ENCODE measurements at regions of chr17 and their contacts with region 1.

Region 1: GRCh38 chr17:73255671-73256181 is 6.0 kb downstream of the CPSF4L start:
- DNase-seq: peak; percentile 55 to 64
- ATAC-seq: peak; percentile 63 to 87 (median 72)
- H3K4me3 ChIP-seq: no peak overlapping the region
- H3K27ac ChIP-seq: no peak overlapping the region
- H3K4me1 ChIP-seq: peaks cover 0 to 8% (median 0%) of the 10 kb centered on the region in 9 donors
- H3K27me3 ChIP-seq: no peaks in the 10 kb centered on the region
- CTCF ChIP-seq: peak in 8 of 9 donors; percentile 94 to 99 (median 98)

Region 2: GRCh38 chr17:73371285-73371684 is 115.6 kb after region 1 on chr17:
- intact Hi-C with region 1: loop called (anchors 1 to 2 kb)
- DNase-seq: no peak
- ATAC-seq: no peak
- H3K4me3 ChIP-seq: no peak overlapping the region
- H3K27ac ChIP-seq: no peak overlapping the region
- H3K4me1 ChIP-seq: peaks cover 0 to 16% (median 12%) of the 10 kb centered on the region in 9 donors
- H3K27me3 ChIP-seq: no peaks in the 10 kb centered on the region
- CTCF ChIP-seq: no peak

Region 3: GRCh38 chr17:73595479-73595878 is 339.8 kb after region 1 on chr17:
- intact Hi-C with region 1: no loop called
- DNase-seq: peak; percentile 17 to 54
- ATAC-seq: peak; percentile 55 to 90 (median 69)
- H3K4me3 ChIP-seq: no peak overlapping the region
- H3K27ac ChIP-seq: no peak overlapping the region
- H3K4me1 ChIP-seq: peaks cover 0 to 34% (median 5%) of the 10 kb centered on the region in 9 donors
- H3K27me3 ChIP-seq: peaks cover 0 to 4% (median 0%) of the 10 kb centered on the region in 7 donors
- CTCF ChIP-seq: peak in 8 of 9 donors; percentile 8 to 55 (median 44)